ENCODE measurements at regions of chr2 and their contacts with region 1.

Region 1: DNA sequence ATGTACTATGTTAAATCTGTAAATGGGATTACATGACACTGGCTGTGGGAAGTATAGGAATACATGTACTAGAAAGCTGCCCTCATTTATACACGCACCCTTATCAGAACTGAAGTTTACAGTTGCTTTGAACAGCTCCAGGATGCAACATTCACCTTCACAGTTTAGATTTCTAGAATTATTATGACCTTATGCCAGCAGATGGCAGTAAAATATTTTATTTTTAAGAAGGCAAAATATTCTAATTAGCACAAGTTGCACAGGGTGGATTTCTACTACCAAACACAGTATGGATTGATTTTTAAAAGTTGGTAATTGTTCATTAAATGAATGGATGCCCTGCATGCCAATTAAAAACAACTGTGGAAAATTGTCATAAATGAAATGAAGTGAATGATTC is 670.4 kb downstream of the KCNJ3 start:
- DNase-seq: peak in 1 of 4 experiments; percentile 17
- ATAC-seq: peak; percentile 45
- H3K4me3 ChIP-seq: no peak overlapping the region
- H3K27ac ChIP-seq: no peak overlapping the region
- H3K4me1 ChIP-seq: peaks cover 0 to 3% of the 10 kb centered on the region in 2 experiments; a peak in 1 of 5 replicates
- H3K27me3 ChIP-seq: no peaks in the 10 kb centered on the region
- CTCF ChIP-seq: peak in 2 of 3 experiments; percentile 27 to 49; a peak in 2 of 6 replicates
- EP300 ChIP-seq: no peak
- POLR2A ChIP-seq: no peak
- RAD21 ChIP-seq: peak; percentile 29 to 30; a peak in 3 of 4 replicates

Region 2: DNA sequence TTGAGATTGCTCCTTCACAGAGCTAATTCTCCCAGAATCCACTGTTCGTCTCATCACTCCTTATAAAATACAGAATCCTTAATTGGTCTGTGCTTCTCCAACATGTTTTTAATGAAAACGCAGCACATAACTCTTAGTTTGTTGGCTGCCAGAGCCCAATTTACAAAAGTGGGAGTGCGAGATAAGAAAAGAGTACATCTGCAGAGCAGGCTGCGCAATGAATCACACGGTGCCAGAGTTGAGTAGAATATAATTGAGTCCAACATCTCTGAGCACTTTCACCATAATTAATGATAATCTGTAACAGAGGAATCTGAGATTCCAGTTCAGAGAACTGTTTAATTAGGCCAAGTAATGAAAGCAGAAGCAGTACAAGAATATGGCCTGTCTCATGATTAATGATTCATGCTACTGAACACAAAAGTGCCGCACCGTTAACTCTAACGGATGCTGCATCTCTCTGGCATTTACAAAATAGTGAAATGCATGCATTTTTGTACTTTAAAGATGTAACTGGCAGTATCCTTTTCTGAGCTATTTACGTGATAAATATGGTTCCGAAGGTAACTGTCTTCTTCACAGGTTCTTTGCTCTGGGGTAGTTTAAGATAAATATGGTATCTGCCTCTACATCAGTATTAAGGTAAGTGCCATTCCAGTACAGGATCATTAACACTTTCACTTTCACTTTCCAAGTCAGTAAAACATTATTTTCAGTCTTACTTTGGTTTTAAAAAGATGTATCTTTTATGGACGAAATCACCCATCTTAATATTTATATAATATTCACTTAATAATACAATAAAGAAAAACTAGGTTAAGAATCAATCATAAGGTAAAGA is 178.0 kb after region 1 on chr2:
- CTCF ChIA-PET with region 1: no interaction called
- POLR2A ChIA-PET with region 1: no interaction called
- in situ Hi-C with region 1: no loop called
- intact Hi-C with region 1: loop called (anchors 10 kb)
- DNase-seq: peak in 1 of 4 experiments; percentile 9
- ATAC-seq: peak; percentile 65
- H3K4me3 ChIP-seq: no peak overlapping the region
- H3K27ac ChIP-seq: peak overlapping the region; percentile 5; the same call in 1 of the 3 replicates
- H3K4me1 ChIP-seq: no peaks in the 10 kb centered on the region
- H3K27me3 ChIP-seq: no peaks in the 10 kb centered on the region
- CTCF ChIP-seq: no peak
- EP300 ChIP-seq: no peak
- POLR2A ChIP-seq: no peak
- RAD21 ChIP-seq: no peak